ENCODE measurements at regions of chr19 and their contacts with region 1.

Region 1: DNA sequence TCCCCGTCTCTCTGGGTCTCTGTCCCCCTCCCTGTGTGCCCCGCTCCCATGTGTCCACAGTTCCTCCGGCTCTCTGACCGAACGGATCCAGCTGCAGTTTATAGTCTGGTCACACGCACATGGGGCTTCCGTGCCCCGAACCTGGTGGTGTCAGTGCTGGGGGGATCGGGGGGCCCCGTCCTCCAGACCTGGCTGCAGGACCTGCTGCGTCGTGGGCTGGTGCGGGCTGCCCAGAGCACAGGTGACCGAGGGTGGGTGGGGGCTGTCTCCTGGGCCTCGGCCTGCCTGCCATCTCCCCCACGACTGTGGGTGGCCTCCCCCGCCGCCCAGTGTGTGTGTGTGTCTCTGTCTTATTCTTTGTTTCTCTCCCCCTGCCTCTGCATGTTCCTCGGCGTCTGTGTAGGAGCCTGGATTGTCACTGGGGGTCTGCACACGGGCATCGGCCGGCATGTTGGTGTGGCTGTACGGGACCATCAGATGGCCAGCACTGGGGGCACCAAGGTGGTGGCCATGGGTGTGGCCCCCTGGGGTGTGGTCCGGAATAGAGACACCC is 10.3 kb downstream of the TRPM4 start:
- DNase-seq: peak in 1 of 4 experiments; percentile 5
- ATAC-seq: peak; percentile 24; the same call in 2 of the 3 replicates
- H3K4me3 ChIP-seq: no peak overlapping the region
- H3K27ac ChIP-seq: no peak overlapping the region
- H3K4me1 ChIP-seq: peaks cover 0 to 19% of the 10 kb centered on the region in 2 experiments; a peak in 2 of 5 replicates
- H3K27me3 ChIP-seq: no peaks in the 10 kb centered on the region
- CTCF ChIP-seq: no peak
- EP300 ChIP-seq: no peak
- POLR2A ChIP-seq: no peak
- RAD21 ChIP-seq: no peak

Region 2: DNA sequence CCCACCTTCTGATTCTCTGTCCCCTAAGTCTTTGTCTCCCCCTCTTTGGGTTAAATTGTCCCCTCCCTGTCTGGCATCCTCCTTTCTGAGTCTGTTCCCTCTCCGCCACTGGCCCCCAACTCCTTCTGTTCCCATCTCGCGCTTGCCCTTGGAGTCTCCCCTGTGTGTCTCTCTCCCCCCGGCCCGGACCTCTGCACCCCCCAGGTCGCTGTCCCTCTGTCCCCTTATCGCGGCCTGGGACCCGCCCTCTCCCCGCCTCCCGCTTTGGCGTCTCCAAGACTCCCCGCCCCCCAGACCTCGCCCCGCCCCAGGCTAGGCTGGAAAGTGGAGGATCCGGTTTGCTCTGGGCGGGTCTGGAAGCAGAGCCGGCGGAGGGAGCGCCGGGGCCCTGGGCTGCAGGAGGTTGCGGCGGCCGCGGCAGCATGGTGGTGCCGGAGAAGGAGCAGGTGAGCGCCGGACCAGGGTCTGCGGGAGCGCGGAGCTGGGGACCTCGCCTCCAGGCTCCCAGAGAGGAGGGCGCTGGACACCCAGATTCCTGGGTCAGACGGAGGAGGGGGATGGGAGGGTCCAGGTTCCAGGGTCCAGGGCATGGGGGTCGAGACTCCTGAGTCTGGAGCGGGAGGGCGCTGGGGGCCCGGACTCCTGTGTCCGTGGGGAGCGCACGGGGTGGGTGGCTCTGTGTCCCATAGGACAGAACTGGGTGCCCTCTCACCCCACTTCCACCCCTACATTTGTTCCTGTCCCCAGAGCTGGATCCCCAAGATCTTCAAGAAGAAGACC is 10.3 kb before region 1 on chr19 and contains the start of gene TRPM4:
- CTCF ChIA-PET with region 1: no interaction called
- POLR2A ChIA-PET with region 1: interaction called, 18 read pairs
- in situ Hi-C with region 1: no loop called
- intact Hi-C with region 1: no loop called
- DNase-seq: peak; percentile 88 to 96 (median 93)
- ATAC-seq: peak; percentile 88
- H3K4me3 ChIP-seq: peak within 1 kb of the TSS; percentile 83
- H3K27ac ChIP-seq: peak within 1 kb of the TSS; percentile 95
- H3K4me1 ChIP-seq: peaks cover 55 to 74% of the 10 kb centered on the region in 2 experiments
- H3K27me3 ChIP-seq: no peaks in the 10 kb centered on the region
- CTCF ChIP-seq: no peak
- EP300 ChIP-seq: no peak
- POLR2A ChIP-seq: peak; percentile 96
- RAD21 ChIP-seq: no peak
- polyA plus RNA-seq, gene TRPM4: 6.5 to 7.9 TPM

Region 3: GRCh38 chr19:49231389-49231788 is 63.5 kb after region 1 on chr19:
- CTCF ChIA-PET with region 1: no interaction called
- POLR2A ChIA-PET with region 1: no interaction called
- in situ Hi-C with region 1: no loop called
- intact Hi-C with region 1: no loop called
- DNase-seq: no peak
- ATAC-seq: no peak
- H3K4me3 ChIP-seq: no peak overlapping the region
- H3K27ac ChIP-seq: no peak overlapping the region
- H3K4me1 ChIP-seq: peaks cover 0 to 2% of the 10 kb centered on the region in 2 experiments; a peak in 2 of 5 replicates
- H3K27me3 ChIP-seq: peaks cover 10 to 31% of the 10 kb centered on the region in 2 experiments; a peak in 3 of 5 replicates
- CTCF ChIP-seq: no peak
- EP300 ChIP-seq: no peak
- POLR2A ChIP-seq: no peak
- RAD21 ChIP-seq: no peak

Measured in K562 (cell line).